Calu3 (cell line): ENCODE measurements at regions of chr2 and their contacts with region 1.

Region 1: DNA sequence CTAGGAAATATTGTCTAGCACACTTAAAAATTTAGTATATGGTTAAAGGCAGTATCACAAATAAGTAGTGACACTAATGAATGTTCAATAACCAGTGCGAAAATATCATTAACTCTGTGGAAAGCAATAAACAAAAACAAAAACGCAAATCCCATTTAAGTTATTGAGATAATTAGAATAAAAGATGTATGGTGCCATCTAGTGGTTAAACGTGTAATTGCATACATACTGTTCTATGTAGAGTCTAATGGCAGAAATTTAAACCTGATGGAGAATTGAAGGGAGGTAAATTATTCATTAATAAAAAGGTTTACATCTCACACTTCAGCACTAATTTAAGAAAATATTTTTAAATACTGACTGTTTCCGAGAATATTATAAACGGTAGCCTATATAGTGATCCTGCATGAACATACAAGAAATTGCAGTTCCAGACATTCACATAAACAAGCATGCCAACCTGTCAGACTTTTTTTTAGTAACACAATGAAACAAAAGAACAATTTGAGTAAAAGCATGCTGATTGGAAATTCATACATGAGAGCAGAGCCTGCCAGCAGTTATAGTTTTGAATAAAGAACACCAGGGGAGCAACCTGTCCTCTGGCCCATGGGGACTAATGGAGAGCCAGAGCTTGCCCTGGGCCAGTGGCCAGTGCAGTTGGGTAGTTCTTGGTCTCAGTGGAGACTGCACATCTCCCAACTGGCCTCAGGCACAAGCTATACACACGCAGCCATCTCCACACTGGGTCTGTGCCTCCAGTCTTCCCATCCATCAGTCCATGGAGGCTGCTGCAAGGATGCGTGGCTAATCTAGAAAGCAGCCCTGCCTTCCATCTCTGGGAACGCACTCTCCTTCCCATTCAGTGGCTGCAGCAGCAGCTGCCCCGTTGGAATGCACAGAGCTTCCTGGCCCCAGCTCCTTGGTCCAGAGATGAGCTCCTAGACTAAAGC is 28.0 kb downstream of the GCG start:
- DNase-seq: peak; percentile 13
- H3K4me3 Mint-ChIP-seq: no peak overlapping the region
- H3K27ac Mint-ChIP-seq: no peak overlapping the region
- H3K4me1 Mint-ChIP-seq: no peaks in the 10 kb centered on the region
- H3K27me3 Mint-ChIP-seq: peaks cover 14% of the 10 kb centered on the region
- CTCF ChIP-seq: no peak

Region 2: DNA sequence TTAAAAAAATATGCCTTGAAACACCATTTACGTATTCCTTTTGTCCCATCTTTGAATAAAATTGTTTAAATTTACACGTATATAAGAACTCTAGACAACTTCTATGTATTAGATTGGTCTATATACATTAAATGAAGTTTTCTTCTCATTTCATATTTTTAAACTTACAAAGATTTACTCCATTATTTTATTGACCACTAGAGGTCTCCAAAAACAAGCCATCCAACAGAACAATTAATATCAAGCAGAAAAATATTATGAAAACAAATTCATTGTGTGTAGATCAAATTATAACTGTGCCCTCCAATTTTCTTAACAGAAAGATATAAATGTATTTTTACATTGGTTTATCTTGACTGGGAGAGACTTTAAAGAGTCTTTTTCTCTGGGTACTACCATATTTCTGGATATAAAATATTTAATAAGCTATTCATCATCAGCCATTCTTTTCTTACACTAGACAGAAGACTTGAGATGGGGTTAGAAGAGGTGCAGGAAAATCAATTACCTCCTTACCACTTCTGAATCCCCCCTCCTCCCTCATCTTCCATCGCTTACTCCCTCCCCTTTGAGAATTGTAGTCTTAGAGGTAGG is 116.5 kb before region 1 on chr2:
- CTCF ChIA-PET with region 1: interaction called, 4 read pairs
- intact Hi-C with region 1: loop called (anchors 1 kb)
- DNase-seq: no peak
- H3K4me3 Mint-ChIP-seq: no peak overlapping the region
- H3K27ac Mint-ChIP-seq: no peak overlapping the region
- H3K4me1 Mint-ChIP-seq: no peaks in the 10 kb centered on the region
- H3K27me3 Mint-ChIP-seq: no peaks in the 10 kb centered on the region
- CTCF ChIP-seq: peak; percentile 15

Region 3: GRCh38 chr2:162518894-162519293 is 394.8 kb after region 1 on chr2:
- CTCF ChIA-PET with region 1: no interaction called
- intact Hi-C with region 1: no loop called
- DNase-seq: no peak
- H3K4me3 Mint-ChIP-seq: no peak overlapping the region
- H3K27ac Mint-ChIP-seq: no peak overlapping the region
- H3K4me1 Mint-ChIP-seq: peaks cover 9% of the 10 kb centered on the region
- H3K27me3 Mint-ChIP-seq: no peaks in the 10 kb centered on the region
- CTCF ChIP-seq: no peak